Panc1 (cell line): ENCODE measurements at regions of chr6 and their contacts with region 1.

Region 1: DNA sequence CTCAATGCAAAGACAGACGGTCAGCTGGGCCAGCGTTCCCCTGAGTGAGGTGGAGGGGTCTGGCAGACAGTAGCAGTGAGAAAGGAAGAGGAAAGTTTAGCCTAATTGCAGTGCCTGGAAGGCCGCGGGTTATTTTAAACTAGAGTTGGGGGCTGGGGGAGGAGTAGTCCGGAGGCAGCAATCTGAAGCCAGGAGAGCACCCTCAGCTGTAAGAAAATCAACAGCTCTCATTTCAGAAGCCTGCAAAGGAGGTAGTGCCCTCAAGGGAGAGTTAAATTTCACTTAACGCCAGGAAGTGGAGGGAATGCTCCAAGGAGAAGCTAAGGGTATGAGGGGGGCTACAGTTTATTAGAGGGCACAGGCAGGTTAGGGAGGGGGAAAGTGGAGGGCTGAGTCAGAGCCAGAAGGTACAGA is 26.9 kb downstream of the RING1 start:
- DNase-seq: no peak
- ATAC-seq: no peak
- H3K4me3 ChIP-seq: no peak overlapping the region
- H3K27ac ChIP-seq: no peak overlapping the region
- H3K4me1 ChIP-seq: no peaks in the 10 kb centered on the region
- H3K27me3 ChIP-seq: no peaks in the 10 kb centered on the region
- CTCF ChIP-seq: no peak

Region 2: DNA sequence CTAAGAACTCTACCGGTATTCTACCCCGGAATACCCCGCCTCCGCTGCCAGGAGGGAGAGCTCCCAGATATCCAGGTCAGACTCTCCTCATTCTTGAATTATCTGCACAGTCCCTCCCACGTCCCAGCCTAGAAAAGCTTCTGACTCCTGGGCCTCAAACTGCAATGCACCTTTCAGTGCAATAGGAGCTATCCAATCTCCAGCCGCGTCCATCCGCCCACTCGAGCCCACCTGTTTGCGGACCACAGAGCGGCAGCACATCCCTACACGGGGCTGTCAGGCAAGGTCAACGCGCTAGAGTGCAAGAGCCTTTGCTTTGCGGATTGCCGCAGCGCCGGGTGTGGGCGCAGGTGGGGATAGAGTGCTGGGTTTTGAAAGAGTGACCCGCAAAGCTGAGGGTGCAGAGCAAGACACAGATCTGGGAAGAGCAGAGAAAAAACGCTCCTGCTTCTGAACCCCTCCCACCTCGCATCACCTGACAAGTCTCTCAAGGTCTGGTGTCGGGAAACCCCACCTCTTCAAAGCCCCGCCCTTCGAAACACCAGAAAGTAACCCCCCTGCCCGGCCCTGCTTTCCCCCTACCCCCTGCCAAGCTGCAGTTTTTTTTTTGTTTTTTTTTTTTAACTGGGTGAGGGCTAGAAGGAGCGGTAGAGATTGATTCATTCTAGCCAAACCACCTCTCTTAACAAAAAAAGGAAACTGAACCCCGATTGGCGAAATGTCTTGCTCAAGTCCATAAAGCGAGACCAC is 77.4 kb after region 1 on chr6:
- CTCF ChIA-PET with region 1: no interaction called
- POLR2A ChIA-PET with region 1: interaction called, 14 read pairs
- in situ Hi-C with region 1: no loop called
- intact Hi-C with region 1: no loop called
- DNase-seq: no peak
- ATAC-seq: peak; percentile 46
- H3K4me3 ChIP-seq: peak overlapping the region; percentile 91 to 92
- H3K27ac ChIP-seq: peak overlapping the region; percentile 99
- H3K4me1 ChIP-seq: peaks cover 26% of the 10 kb centered on the region
- H3K27me3 ChIP-seq: no peaks in the 10 kb centered on the region
- CTCF ChIP-seq: no peak

Region 3: GRCh38 chr6:33751771-33752645 is 516.8 kb after region 1 on chr6:
- CTCF ChIA-PET with region 1: no interaction called
- POLR2A ChIA-PET with region 1: no interaction called
- in situ Hi-C with region 1: no loop called
- intact Hi-C with region 1: no loop called
- DNase-seq: no peak
- ATAC-seq: peak; percentile 27; the same call in 1 of the 2 replicates
- H3K4me3 ChIP-seq: no peak overlapping the region
- H3K27ac ChIP-seq: no peak overlapping the region
- H3K4me1 ChIP-seq: peaks cover 9% of the 10 kb centered on the region
- H3K27me3 ChIP-seq: no peaks in the 10 kb centered on the region
- CTCF ChIP-seq: no peak